ENCODE measurements at regions of chr5 and their contacts with region 1.

Region 1: DNA sequence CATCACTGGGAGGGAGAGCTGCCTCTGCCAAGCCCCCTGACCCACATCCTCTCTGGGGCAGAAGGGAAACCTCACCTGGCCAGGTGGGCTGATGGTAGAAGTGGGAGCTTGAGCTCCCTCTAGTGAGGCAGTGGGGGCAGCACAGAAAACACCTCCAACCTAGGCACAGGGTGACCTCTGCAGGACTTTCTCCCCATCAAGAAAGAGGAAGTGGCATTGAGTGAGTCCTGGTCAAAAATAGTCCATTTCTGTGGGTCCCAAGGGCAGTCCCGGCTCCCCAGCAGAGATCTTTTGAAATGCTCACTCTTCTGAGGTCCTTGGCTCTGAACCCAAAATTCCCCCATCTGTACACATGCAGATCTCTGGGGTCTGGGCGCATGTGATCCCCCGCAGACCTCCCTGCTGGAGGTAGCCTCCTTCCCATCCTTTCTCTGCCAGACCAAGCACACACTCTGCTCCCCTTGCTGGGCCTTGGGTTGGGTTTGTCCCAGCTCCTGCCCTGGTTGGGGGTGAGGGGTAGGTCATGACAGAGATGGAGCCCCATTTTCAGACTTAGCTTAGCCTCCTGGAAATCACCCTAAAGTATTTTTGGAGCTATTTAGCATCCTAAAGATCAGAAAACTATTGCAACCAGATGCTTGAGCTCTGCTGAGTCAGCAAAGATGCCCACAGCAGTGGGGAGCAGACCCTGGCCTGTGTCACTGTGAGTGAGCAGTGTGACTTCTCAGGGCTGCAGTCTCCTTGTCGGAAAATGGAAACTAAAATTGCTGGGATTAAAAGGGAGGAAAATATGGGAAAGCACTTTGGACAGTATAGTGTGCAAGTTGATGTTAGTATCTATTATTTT is 41.6 kb upstream of the LCP2 start:
- DNase-seq: peak; percentile 39 to 88 (median 69)
- ATAC-seq: peak; percentile 65
- H3K4me3 ChIP-seq: no peak overlapping the region
- H3K4me3 Mint-ChIP-seq: no peak overlapping the region
- H3K27ac ChIP-seq: no peak overlapping the region
- H3K27ac Mint-ChIP-seq: peak overlapping the region; percentile 85
- H3K4me1 ChIP-seq: peaks cover 49% of the 10 kb centered on the region
- H3K4me1 Mint-ChIP-seq: peaks cover 39% of the 10 kb centered on the region
- H3K27me3 ChIP-seq: no peaks in the 10 kb centered on the region
- H3K27me3 Mint-ChIP-seq: no peaks in the 10 kb centered on the region
- CTCF ChIP-seq: peak; percentile 68

Region 2: DNA sequence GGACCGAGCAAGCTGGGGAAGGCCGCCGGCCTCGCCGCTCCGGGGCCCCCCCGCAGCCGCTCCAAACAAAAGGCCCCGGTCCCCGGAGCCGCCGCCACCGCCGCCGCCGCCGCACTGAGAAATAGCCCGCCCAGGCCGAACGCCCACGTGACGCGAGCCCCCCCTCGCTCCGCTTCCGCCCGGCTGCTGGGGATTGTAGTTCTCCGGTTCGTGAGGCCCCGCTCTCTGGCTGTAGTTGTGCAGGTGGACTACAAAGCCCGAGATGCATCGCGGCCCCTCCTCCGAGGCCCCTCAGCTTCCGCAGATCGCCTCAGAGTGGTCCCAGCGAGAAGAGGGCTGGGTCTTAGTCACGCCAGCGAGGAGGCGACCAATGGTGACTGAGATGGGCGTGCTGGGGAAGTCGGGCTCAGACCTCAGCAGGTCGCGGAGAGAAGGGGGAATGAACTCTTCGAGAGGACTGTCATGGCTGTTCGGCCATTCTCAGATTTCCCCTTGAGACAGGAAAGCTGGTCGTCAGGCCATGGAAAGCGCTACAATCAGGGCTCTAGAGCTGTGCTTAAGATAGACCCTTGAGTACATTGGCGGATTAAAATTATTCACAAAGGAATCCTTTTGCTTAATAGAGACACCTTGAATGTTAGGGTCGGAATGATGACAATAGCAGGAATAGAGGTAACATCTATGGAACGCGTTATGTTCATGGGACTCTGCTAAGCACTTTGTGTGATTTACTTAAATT is 1759.5 kb before region 1 on chr5:
- CTCF ChIA-PET with region 1: no interaction called
- POLR2A ChIA-PET with region 1: no interaction called
- intact Hi-C with region 1: loop called in 1 of 2 experiments (anchors 5 kb)
- DNase-seq: peak; percentile 94 to 99 (median 97)
- ATAC-seq: peak; percentile 97
- H3K4me3 ChIP-seq: peak overlapping the region; percentile 60 to 74
- H3K4me3 Mint-ChIP-seq: peak overlapping the region; percentile 89
- H3K27ac ChIP-seq: peak overlapping the region; percentile 45 to 96
- H3K27ac Mint-ChIP-seq: peak overlapping the region; percentile 96
- H3K4me1 ChIP-seq: peaks cover 26% of the 10 kb centered on the region
- H3K4me1 Mint-ChIP-seq: peaks cover 41% of the 10 kb centered on the region
- H3K27me3 ChIP-seq: no peaks in the 10 kb centered on the region
- H3K27me3 Mint-ChIP-seq: peaks cover 2% of the 10 kb centered on the region
- CTCF ChIP-seq: no peak

Region 3: GRCh38 chr5:170225326-170226128 is 113.6 kb before region 1 on chr5:
- CTCF ChIA-PET with region 1: interaction called, 297 read pairs
- POLR2A ChIA-PET with region 1: interaction called, 9 read pairs
- intact Hi-C with region 1: loop called (anchors 1 kb)
- DNase-seq: peak; percentile 47 to 86 (median 79)
- ATAC-seq: peak; percentile 69
- H3K4me3 ChIP-seq: no peak overlapping the region
- H3K4me3 Mint-ChIP-seq: no peak overlapping the region
- H3K27ac ChIP-seq: no peak overlapping the region
- H3K27ac Mint-ChIP-seq: no peak overlapping the region
- H3K4me1 ChIP-seq: peaks cover 6% of the 10 kb centered on the region
- H3K4me1 Mint-ChIP-seq: peaks cover 4% of the 10 kb centered on the region
- H3K27me3 ChIP-seq: no peaks in the 10 kb centered on the region
- H3K27me3 Mint-ChIP-seq: no peaks in the 10 kb centered on the region
- CTCF ChIP-seq: peak; percentile 88

Region 4: DNA sequence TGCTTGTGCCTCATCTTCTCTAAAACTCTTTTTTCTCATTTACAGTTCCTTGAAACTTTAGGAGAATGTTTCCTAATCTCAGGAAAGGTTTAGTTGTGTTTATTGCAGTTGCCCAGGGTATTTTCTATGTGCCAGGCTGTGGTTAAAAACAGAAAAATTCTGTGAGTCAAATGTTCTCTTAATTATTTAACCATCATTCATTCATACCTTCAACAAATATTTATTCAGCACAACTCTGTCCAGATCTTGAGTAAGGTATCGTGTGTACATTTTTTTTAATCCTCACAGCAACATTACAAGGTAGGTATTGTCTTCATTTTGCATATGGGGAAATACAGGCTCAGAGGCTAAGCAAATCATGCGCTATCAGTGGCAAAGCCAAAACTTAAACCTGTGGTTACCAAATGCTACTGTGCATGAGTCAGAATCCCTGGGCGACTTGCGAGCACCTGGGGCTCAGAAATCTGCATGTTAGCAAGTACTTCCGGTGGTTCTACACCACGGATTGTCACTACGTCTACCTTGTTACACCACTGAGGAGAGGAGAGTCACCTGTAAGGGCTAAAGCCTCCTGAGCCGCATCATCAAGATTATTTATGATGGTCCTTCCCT is 85.2 kb before region 1 on chr5:
- CTCF ChIA-PET with region 1: interaction called, 20 read pairs
- POLR2A ChIA-PET with region 1: interaction called, 3 read pairs
- intact Hi-C with region 1: no loop called
- DNase-seq: peak; percentile 44 to 92 (median 73)
- ATAC-seq: peak; percentile 95
- H3K4me3 ChIP-seq: no peak overlapping the region
- H3K4me3 Mint-ChIP-seq: peak overlapping the region; percentile 16
- H3K27ac ChIP-seq: peak overlapping the region; percentile 38 to 61
- H3K27ac Mint-ChIP-seq: peak overlapping the region; percentile 95
- H3K4me1 ChIP-seq: peaks cover 39% of the 10 kb centered on the region
- H3K4me1 Mint-ChIP-seq: peaks cover 77% of the 10 kb centered on the region
- H3K27me3 ChIP-seq: no peaks in the 10 kb centered on the region
- H3K27me3 Mint-ChIP-seq: no peaks in the 10 kb centered on the region
- CTCF ChIP-seq: no peak

Region 5: GRCh38 chr5:170278611-170279452 is 60.3 kb before region 1 on chr5:
- CTCF ChIA-PET with region 1: interaction called, 342 read pairs
- POLR2A ChIA-PET with region 1: interaction called, 33 read pairs
- intact Hi-C with region 1: loop called (anchors 1 kb)
- DNase-seq: peak; percentile 76 to 97 (median 88)
- ATAC-seq: peak; percentile 67
- H3K4me3 ChIP-seq: peak overlapping the region; percentile 28 to 40
- H3K4me3 Mint-ChIP-seq: peak overlapping the region; percentile 78
- H3K27ac ChIP-seq: peak overlapping the region; percentile 36 to 76
- H3K27ac Mint-ChIP-seq: peak overlapping the region; percentile 97
- H3K4me1 ChIP-seq: peaks cover 95% of the 10 kb centered on the region
- H3K4me1 Mint-ChIP-seq: peaks cover 97% of the 10 kb centered on the region
- H3K27me3 ChIP-seq: no peaks in the 10 kb centered on the region
- H3K27me3 Mint-ChIP-seq: no peaks in the 10 kb centered on the region
- CTCF ChIP-seq: no peak

Region 6: DNA sequence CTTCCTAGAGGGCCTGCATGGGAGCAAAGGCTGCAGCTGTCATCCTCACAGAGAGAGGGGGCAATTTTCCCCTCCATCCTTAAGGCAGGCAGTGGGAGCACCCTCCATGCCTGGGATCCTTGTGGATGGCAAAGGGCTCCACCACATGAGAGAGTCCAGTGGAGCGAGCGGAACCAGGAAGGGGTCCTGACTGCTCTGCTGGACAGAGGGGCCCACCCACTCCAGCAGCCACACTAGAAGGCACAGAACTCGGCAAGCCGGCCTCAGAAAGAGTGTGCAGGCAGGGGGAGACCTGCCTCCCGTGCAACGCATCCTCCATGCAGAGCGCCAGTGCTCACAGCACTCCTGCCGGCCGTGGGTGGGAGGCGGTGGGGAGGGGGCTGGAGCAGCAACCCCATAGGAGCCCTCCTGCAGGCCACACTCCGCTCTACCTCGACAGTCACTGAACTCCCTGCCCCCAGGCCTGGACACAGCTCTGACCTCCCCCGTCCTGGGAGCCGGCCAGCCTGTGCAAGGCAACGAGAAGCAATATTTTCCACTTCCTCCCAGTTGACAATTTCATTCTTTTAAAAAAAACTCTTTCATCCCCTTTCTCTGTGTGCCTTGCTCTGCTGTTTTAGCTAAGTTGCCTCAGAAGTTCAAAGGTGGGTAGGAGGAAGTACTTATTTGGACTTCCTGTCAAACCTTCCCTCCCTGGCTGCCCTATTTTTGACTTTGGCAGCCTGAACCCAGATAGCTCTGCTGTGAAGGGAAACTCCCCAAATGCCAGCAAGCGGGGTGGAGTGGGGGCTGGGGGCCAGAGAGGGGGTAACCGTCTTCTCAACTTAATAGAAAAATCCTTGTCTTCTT is 36.3 kb before region 1 on chr5:
- CTCF ChIA-PET with region 1: interaction called, 192 read pairs
- POLR2A ChIA-PET with region 1: interaction called, 112 read pairs
- intact Hi-C with region 1: no loop called
- DNase-seq: peak; percentile 28 to 96 (median 68)
- ATAC-seq: peak; percentile 90
- H3K4me3 ChIP-seq: peak overlapping the region; percentile 42 to 60
- H3K4me3 Mint-ChIP-seq: peak overlapping the region; percentile 86
- H3K27ac ChIP-seq: peak overlapping the region; percentile 46 to 69
- H3K27ac Mint-ChIP-seq: peak overlapping the region; percentile 96
- H3K4me1 ChIP-seq: peaks cover 65% of the 10 kb centered on the region
- H3K4me1 Mint-ChIP-seq: peaks cover 84% of the 10 kb centered on the region
- H3K27me3 ChIP-seq: no peaks in the 10 kb centered on the region
- H3K27me3 Mint-ChIP-seq: no peaks in the 10 kb centered on the region
- CTCF ChIP-seq: peak; percentile 27